AG04449 (cell line): ENCODE measurements at regions of chr6 and their contacts with region 1.

Region 1: GRCh38 chr6:46090115-46091079 is 39.4 kb upstream of the ENPP4 start:
- DNase-seq: peak; percentile 1
- H3K4me3 ChIP-seq: no peak overlapping the region
- CTCF ChIP-seq: peak; percentile 70

Region 2: GRCh38 chr6:46078294-46078693 is 12.1 kb before region 1 on chr6:
- CTCF ChIA-PET with region 1: interaction called, 15 read pairs
- POLR2A ChIA-PET with region 1: no interaction called
- DNase-seq: no peak
- H3K4me3 ChIP-seq: no peak overlapping the region
- CTCF ChIP-seq: no peak

Region 3: GRCh38 chr6:46410334-46410953 is 320.0 kb after region 1 on chr6:
- CTCF ChIA-PET with region 1: interaction called, 11 read pairs
- POLR2A ChIA-PET with region 1: no interaction called
- DNase-seq: no peak
- H3K4me3 ChIP-seq: no peak overlapping the region
- CTCF ChIP-seq: peak; percentile 41